ENCODE measurements at regions of chr6 and their contacts with region 1.

Region 1: DNA sequence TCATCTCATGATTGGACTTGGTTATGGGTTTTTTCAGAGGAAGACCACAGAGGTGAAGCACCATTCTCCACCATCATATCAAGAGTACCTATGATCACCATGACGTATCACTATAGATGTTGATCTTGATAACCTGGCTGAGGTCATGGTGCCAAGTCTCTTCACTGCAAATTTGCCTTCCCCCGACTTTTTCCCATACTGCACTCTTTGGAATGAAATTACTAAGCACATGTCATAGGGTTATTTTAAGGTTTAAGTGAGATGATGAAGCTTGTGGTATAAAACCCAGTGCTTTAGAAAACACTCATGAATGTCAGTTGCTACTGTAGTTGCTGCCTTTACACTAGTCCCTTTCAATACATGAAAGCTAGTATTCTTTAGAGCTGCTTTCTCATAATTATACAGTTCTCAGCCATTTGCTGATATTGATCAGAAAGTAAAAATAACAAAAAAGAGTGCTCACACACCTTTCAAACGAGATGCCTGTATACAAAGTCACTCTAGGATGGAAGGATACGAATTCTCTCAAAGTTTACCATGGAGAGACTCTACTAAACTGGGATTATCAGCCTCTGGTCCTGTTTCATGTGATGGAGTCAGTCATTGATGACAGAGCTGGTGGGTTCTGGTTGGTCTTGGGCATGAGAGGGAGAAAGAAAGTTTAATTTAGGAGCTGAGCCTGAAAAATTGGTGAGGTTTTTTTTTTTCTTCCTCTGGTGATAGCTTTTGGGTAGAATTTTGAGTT is 228.1 kb downstream of the PRL start:
- DNase-seq: peak; percentile 13
- H3K4me3 Mint-ChIP-seq: peak overlapping the region; percentile 59
- H3K27ac Mint-ChIP-seq: peak overlapping the region; percentile 98
- H3K4me1 Mint-ChIP-seq: peaks cover 71% of the 10 kb centered on the region
- H3K27me3 Mint-ChIP-seq: no peaks in the 10 kb centered on the region

Region 2: DNA sequence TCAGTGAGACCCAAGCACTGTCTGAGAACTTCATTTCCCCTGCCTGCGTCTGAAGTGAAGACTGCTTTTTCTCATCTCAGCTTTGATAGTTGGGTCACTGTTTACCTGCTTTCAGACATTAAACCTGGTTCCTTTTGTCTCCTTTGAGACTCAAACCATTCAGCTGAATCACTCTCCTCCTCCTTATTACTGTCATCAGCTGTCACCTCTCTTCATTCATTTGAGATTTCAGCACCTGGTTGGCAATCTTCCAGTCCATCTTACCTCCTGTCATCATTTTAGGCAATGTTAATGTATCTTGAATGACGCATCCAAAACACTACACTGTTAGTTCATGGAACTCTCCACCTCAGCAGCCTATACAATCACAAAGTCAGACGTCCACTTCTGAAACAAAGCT is 509.5 kb before region 1 on chr6:
- intact Hi-C with region 1: no loop called
- DNase-seq: no peak
- H3K4me3 Mint-ChIP-seq: no peak overlapping the region
- H3K27ac Mint-ChIP-seq: no peak overlapping the region
- H3K4me1 Mint-ChIP-seq: no peaks in the 10 kb centered on the region
- H3K27me3 Mint-ChIP-seq: no peaks in the 10 kb centered on the region

Region 3: GRCh38 chr6:21846541-21847451 is 221.9 kb before region 1 on chr6:
- intact Hi-C with region 1: loop called (anchors 5 kb)
- DNase-seq: no peak
- H3K4me3 Mint-ChIP-seq: peak overlapping the region; percentile 13
- H3K27ac Mint-ChIP-seq: peak overlapping the region; percentile 33
- H3K4me1 Mint-ChIP-seq: peaks cover 30% of the 10 kb centered on the region
- H3K27me3 Mint-ChIP-seq: no peaks in the 10 kb centered on the region

Region 4: GRCh38 chr6:21900730-21901129 is 168.0 kb before region 1 on chr6:
- intact Hi-C with region 1: no loop called
- DNase-seq: no peak
- H3K4me3 Mint-ChIP-seq: no peak overlapping the region
- H3K27ac Mint-ChIP-seq: no peak overlapping the region
- H3K4me1 Mint-ChIP-seq: no peaks in the 10 kb centered on the region
- H3K27me3 Mint-ChIP-seq: no peaks in the 10 kb centered on the region

Region 5: GRCh38 chr6:21987501-21987957 is 81.2 kb before region 1 on chr6:
- intact Hi-C with region 1: loop called (anchors 2 kb)
- DNase-seq: no peak
- H3K4me3 Mint-ChIP-seq: peak overlapping the region; percentile 30
- H3K27ac Mint-ChIP-seq: peak overlapping the region; percentile 17
- H3K4me1 Mint-ChIP-seq: peaks cover 25% of the 10 kb centered on the region
- H3K27me3 Mint-ChIP-seq: no peaks in the 10 kb centered on the region

Region 6: DNA sequence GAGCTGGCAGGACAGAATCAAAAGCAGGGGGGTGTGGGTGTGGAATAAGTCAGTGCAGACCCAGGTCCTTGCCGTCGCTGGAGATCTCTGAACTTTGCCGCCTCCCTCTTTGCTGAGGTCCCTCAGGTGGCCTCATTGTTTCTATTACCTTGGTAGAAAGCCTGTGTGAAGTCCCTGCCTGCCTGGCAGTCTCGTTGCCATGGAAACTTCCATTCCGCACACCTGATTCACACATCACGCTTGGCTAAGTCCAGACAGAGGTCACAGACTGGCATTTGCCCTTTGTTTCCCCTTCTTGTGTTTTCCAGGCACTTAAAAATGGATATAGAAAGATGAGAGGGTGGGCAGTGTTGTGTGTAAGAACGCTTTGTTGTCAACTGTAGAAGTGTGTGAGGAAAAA is 32.5 kb before region 1 on chr6:
- intact Hi-C with region 1: no loop called
- DNase-seq: no peak
- H3K4me3 Mint-ChIP-seq: no peak overlapping the region
- H3K27ac Mint-ChIP-seq: no peak overlapping the region
- H3K4me1 Mint-ChIP-seq: peaks cover 7% of the 10 kb centered on the region
- H3K27me3 Mint-ChIP-seq: peaks cover 6% of the 10 kb centered on the region

Region 7: DNA sequence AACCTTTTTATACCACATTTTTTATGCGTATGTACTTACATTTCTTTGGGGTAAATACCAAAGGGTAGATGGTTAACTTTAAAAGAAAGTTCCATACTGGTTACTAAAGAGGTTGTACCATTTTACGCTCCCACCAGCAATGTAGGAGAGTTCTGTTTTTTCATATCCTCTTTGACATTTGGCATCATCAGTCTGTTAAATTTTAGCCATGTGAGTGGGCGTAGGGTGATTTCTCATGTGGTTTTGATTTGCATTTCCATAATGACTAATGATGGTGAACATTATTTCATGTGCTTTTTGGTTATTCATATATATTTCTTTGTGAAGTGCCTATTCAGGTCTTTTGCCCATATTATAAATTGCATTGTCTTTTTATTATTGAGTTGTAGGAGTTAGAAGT is 33.9 kb after region 1 on chr6:
- intact Hi-C with region 1: loop called (anchors 1 kb)
- DNase-seq: no peak
- H3K4me3 Mint-ChIP-seq: no peak overlapping the region
- H3K27ac Mint-ChIP-seq: peak overlapping the region; percentile 85
- H3K4me1 Mint-ChIP-seq: peaks cover 19% of the 10 kb centered on the region
- H3K27me3 Mint-ChIP-seq: no peaks in the 10 kb centered on the region

Region 8: DNA sequence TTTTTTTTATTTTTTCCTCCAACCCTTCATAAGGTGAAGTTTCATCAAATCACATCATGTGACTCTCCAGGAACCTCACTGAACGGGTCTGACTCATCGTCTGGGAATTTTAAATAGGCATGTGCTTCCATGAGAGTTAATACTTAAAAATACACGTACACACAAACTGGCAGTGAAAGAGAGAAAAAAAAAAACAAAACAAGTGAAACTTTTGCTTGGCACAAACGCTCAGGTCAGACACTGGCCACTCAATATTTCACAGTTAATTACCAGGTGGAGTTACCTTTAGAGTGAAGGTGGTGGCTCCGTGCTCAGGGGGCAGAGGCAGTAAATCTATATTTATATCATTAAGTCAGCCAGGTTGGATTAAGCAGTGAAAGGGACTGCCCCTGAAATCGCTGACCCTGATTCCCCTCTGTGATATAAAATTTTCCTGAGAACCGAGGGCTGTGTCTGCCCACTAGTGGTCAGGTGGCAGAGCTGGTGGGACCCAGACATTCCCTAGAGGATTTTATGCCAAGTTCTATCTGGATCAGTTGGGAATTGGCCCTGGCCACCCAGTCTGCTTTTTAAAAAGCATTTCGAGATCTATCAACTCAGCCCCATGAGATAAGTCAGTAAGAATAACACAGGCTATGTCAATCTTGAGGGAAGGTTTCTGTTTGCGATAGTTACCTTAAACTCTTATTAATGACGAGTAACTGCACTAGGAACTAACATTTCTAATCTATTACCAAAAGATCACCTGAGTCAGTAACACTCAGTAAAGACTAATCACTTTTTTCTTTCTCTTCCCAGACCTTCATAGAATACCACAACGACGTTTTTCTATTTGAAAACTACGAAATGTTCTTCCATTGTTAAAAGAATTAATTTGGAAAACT is 759.7 kb after region 1 on chr6:
- intact Hi-C with region 1: no loop called
- DNase-seq: no peak
- H3K4me3 Mint-ChIP-seq: no peak overlapping the region
- H3K27ac Mint-ChIP-seq: no peak overlapping the region
- H3K4me1 Mint-ChIP-seq: no peaks in the 10 kb centered on the region
- H3K27me3 Mint-ChIP-seq: no peaks in the 10 kb centered on the region

Measured in activated T-helper 2 cell treated with anti-CD3 and anti-CD28 coated beads, Interferon-gamma antibody, Interleukin-2, Interleukin-4, amounts not matched to agents 10 μg/mL and 5 μg/mL and 100 μg/mL, durations not matched to agents 14 hours and 24 hours and 36 hours (primary cell).